Panc1 (cell line): ENCODE measurements at regions of chr3 and their contacts with region 1.

Region 1: GRCh38 chr3:107235928-107236315 is 141.3 kb upstream of the CCDC54 start:
- DNase-seq: peak; percentile 68
- ATAC-seq: peak; percentile 77
- H3K4me3 ChIP-seq: peak overlapping the region; percentile 52 to 54
- H3K27ac ChIP-seq: peak overlapping the region; percentile 62; the same call in 1 of the 2 replicates
- H3K4me1 ChIP-seq: 0 out of 2 replicates have a peak, but pooled peaks cover 5% of the 10 kb centered on the region
- H3K27me3 ChIP-seq: peaks cover 2% of the 10 kb centered on the region; the same call in 1 of the 2 replicates
- CTCF ChIP-seq: peak; percentile 87

Region 2: GRCh38 chr3:106711650-106712049 is 524.3 kb before region 1 on chr3:
- CTCF ChIA-PET with region 1: no interaction called
- POLR2A ChIA-PET with region 1: no interaction called
- in situ Hi-C with region 1: no loop called
- intact Hi-C with region 1: no loop called
- DNase-seq: no peak
- ATAC-seq: no peak
- H3K4me3 ChIP-seq: no peak overlapping the region
- H3K27ac ChIP-seq: no peak overlapping the region
- H3K4me1 ChIP-seq: no peaks in the 10 kb centered on the region
- H3K27me3 ChIP-seq: no peaks in the 10 kb centered on the region
- CTCF ChIP-seq: no peak

Region 3: GRCh38 chr3:107421170-107421792 is 185.4 kb after region 1 on chr3:
- CTCF ChIA-PET with region 1: interaction called, 3 read pairs
- POLR2A ChIA-PET with region 1: no interaction called
- in situ Hi-C with region 1: no loop called
- intact Hi-C with region 1: loop called (anchors 2 kb)
- DNase-seq: peak; percentile 54
- ATAC-seq: peak; percentile 80; the same call in 1 of the 2 replicates
- H3K4me3 ChIP-seq: no peak overlapping the region; a peak in 1 of 4 replicates
- H3K27ac ChIP-seq: no peak overlapping the region
- H3K4me1 ChIP-seq: peaks cover 4% of the 10 kb centered on the region
- H3K27me3 ChIP-seq: peaks cover 11% of the 10 kb centered on the region
- CTCF ChIP-seq: peak; percentile 80

Region 4: DNA sequence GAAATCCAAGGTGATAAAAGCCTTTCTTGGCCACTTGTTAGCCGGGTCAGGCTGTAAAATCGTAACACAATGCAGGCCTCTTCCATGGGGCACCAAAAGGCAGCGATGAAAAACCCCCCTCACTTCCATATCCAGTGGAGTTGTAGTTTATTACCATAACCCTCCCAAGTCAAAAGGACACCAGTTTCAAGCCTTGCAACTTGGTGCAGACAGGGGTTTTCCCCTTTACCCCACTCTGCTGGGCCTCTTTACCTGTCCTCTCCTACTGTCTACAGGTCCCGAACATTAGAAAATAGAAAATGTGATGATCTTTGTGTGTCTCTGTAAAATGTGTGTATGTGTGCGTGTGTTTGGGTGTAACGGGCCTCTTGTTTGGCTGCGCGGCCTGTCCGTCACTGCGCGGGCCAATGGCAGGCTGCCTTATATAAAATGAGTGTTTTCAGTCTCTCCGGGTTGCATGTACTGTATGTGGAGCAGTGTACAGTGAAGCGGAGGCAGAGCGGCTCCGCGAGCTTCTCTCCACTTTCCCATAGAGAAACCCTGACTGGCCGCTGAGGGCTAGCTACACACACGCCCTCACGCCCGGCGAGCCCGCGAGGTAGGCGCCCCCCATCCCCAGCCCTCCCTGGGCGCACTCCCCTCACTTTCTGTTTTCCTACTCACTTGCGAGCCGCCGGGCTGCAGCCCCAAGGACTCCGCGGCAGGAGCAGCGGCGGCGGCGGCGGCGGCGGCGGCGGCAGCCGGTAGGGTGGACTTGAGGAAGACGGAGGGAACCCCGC is 286.8 kb after region 1 on chr3 and contains the start of gene BBX:
- CTCF ChIA-PET with region 1: no interaction called
- POLR2A ChIA-PET with region 1: no interaction called
- in situ Hi-C with region 1: no loop called
- intact Hi-C with region 1: loop called (anchors 5 kb)
- DNase-seq: peak; percentile 98
- ATAC-seq: peak; percentile 96
- H3K4me3 ChIP-seq: peak within 1 kb of the TSS; percentile 59 to 86
- H3K27ac ChIP-seq: peak within 1 kb of the TSS; percentile 67
- H3K4me1 ChIP-seq: peaks cover 4% of the 10 kb centered on the region
- H3K27me3 ChIP-seq: peaks cover 8% of the 10 kb centered on the region; the same call in 1 of the 2 replicates
- CTCF ChIP-seq: no peak
- total RNA-seq, gene BBX: 28.5 TPM

Region 5: GRCh38 chr3:107545680-107546120 is 309.8 kb after region 1 on chr3:
- CTCF ChIA-PET with region 1: no interaction called
- POLR2A ChIA-PET with region 1: no interaction called
- in situ Hi-C with region 1: no loop called
- intact Hi-C with region 1: loop called (anchors 5 kb)
- DNase-seq: no peak
- ATAC-seq: no peak
- H3K4me3 ChIP-seq: no peak overlapping the region
- H3K27ac ChIP-seq: no peak overlapping the region
- H3K4me1 ChIP-seq: no peaks in the 10 kb centered on the region
- H3K27me3 ChIP-seq: no peaks in the 10 kb centered on the region
- CTCF ChIP-seq: no peak

Region 6: DNA sequence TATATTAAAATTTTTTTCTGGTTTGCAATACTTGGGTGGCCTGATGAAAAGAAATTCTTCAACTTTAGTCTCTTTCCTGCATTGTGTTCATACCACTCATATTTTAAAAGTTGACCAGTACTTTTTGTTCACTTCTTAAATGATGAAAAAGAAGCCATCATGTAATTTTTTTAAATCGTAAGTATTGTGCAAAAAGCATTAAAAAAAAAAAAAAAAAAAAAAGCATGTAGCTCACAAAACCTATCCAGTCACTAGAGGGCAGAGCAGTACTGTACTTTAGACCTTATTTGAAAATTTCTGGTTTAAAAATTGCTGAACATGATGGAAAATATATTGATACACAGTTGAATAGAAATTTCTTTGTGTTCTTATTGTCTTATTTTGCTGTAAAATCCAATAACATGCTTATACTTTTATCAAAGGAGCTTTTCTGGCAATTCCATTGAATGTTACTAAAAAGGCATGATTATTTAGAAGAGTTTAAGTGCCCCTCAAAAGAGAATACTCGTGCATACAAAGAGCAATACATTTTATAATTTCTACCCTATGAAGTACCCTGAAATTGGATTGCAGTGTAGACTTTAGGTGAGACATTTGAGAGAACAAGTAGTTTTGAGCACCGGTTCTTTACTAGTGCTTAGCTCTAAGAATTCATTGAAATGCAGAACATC is 424.5 kb after region 1 on chr3:
- CTCF ChIA-PET with region 1: no interaction called
- POLR2A ChIA-PET with region 1: no interaction called
- in situ Hi-C with region 1: no loop called
- intact Hi-C with region 1: loop called (anchors 10 kb)
- DNase-seq: no peak
- ATAC-seq: no peak
- H3K4me3 ChIP-seq: no peak overlapping the region
- H3K27ac ChIP-seq: no peak overlapping the region
- H3K4me1 ChIP-seq: no peaks in the 10 kb centered on the region
- H3K27me3 ChIP-seq: no peaks in the 10 kb centered on the region
- CTCF ChIP-seq: peak; percentile 70; the same call in 1 of the 2 replicates

Region 7: DNA sequence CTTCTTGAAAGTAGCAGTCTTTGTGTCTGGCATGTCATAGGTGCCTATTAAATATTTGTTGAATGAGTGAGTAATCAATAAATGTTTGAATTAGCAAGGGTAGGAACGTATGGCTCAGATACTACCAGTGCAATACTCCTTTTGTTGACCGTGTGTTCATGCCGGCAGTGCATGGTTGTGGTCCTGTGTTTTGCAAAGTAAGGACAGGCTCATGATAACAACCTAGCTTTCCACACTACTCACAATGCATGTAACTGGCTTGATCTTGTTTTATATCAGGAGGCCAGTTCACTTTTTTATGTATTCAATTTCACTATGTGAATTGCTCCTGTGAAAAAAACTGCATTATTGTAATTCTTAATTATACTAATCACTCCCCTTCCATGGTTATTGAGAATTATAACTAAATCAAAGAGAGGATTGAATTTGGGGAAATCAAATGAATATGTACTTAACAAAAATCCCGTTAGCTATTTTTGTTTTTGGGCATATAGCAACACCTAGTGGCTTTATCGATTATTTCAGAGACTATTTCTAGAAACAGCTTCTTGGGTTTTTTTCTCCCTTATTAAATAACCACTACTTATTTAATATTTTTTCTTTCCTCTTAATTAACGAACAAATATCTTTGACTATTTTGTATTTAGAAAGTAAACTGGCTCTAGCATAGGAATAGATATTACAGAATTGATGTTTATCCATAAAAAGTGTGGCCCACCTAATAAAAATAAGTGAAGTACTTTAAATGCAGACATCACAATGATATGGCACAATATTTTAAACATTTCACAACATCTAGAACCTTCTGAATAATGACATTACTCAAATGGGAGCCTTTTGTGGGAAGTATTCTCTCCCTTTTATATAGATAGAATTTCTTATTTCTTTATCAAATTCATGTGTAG is 505.3 kb after region 1 on chr3:
- CTCF ChIA-PET with region 1: no interaction called
- POLR2A ChIA-PET with region 1: no interaction called
- in situ Hi-C with region 1: no loop called
- intact Hi-C with region 1: loop called (anchors 2 kb)
- DNase-seq: no peak
- ATAC-seq: 0 out of 2 replicates have a peak, but pooled peaks have one; percentile 58
- H3K4me3 ChIP-seq: no peak overlapping the region
- H3K27ac ChIP-seq: no peak overlapping the region
- H3K4me1 ChIP-seq: no peaks in the 10 kb centered on the region
- H3K27me3 ChIP-seq: no peaks in the 10 kb centered on the region
- CTCF ChIP-seq: peak; percentile 52; the same call in 1 of the 2 replicates

Region 8: DNA sequence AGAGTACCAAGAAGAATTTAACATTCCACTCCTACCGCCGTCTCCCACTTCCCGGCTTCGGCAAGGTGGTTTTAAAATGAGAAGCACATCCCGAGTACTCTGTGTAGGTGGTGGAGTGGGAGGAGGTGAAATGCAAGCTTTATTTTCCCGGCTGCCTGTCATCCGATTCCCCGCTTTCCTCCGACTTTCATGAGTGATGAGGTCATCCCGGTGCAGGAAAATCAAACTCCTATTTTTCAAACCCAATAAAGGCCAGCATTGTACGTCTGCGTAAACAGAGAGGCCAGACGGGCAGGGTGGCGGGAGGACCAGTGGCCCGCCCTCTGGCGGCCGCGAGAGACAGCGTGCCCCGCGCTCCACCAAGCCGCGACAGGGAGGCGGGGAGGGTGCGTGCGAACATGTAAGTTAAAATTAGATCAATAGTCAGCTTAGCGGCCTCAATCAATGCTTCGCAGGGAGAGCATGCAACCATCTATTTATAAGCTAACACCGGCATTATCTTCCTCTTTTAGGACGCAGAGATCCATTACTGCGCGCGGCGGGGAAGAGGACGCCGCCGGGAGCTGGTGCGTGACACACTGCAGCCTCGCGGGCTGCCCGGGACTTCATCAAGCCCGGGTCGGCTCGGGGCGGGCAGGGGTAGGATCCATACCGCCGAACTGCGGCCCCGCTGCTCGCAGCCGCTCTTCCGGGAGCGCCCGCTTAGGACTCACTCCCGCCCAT is 691.6 kb after region 1 on chr3:
- CTCF ChIA-PET with region 1: no interaction called
- POLR2A ChIA-PET with region 1: no interaction called
- in situ Hi-C with region 1: no loop called
- intact Hi-C with region 1: loop called (anchors 10 kb)
- DNase-seq: no peak
- ATAC-seq: peak; percentile 99
- H3K4me3 ChIP-seq: peak overlapping the region; percentile 58 to 70
- H3K27ac ChIP-seq: no peak overlapping the region
- H3K4me1 ChIP-seq: 0 out of 2 replicates have a peak, but pooled peaks cover 2% of the 10 kb centered on the region
- H3K27me3 ChIP-seq: peaks cover 27% of the 10 kb centered on the region
- CTCF ChIP-seq: peak; percentile 99